Right cardiac atrium (tissue), 5 donors: ENCODE measurements at regions of chr7 and their contacts with region 1.

Region 1: GRCh38 chr7:100889761-100890634 is 483 bp upstream of the UFSP1 start:
- DNase-seq: peak; percentile 96 to 98 (median 98)
- ATAC-seq: peak; percentile 92 to 93
- H3K4me3 ChIP-seq: peak overlapping the region; percentile 51
- H3K27ac ChIP-seq: peak overlapping the region; percentile 88
- H3K4me1 ChIP-seq: peaks cover 4% of the 10 kb centered on the region
- H3K27me3 ChIP-seq: no peaks in the 10 kb centered on the region

Region 2: GRCh38 chr7:100812741-100813478 is 77.1 kb before region 1 on chr7:
- intact Hi-C with region 1: no loop called
- DNase-seq: no peak
- ATAC-seq: peak in 1 of 2 donors; percentile 9
- H3K4me3 ChIP-seq: no peak overlapping the region
- H3K27ac ChIP-seq: no peak overlapping the region
- H3K4me1 ChIP-seq: no peaks in the 10 kb centered on the region
- H3K27me3 ChIP-seq: no peaks in the 10 kb centered on the region

Region 3: GRCh38 chr7:101077303-101078089 is 187.5 kb after region 1 on chr7:
- intact Hi-C with region 1: loop called in 1 of 4 experiments (anchors 5 kb)
- DNase-seq: peak; percentile 76 to 88 (median 80)
- ATAC-seq: peak; percentile 87 to 92
- H3K4me3 ChIP-seq: no peak overlapping the region
- H3K27ac ChIP-seq: no peak overlapping the region
- H3K4me1 ChIP-seq: no peaks in the 10 kb centered on the region
- H3K27me3 ChIP-seq: no peaks in the 10 kb centered on the region

Region 4: DNA sequence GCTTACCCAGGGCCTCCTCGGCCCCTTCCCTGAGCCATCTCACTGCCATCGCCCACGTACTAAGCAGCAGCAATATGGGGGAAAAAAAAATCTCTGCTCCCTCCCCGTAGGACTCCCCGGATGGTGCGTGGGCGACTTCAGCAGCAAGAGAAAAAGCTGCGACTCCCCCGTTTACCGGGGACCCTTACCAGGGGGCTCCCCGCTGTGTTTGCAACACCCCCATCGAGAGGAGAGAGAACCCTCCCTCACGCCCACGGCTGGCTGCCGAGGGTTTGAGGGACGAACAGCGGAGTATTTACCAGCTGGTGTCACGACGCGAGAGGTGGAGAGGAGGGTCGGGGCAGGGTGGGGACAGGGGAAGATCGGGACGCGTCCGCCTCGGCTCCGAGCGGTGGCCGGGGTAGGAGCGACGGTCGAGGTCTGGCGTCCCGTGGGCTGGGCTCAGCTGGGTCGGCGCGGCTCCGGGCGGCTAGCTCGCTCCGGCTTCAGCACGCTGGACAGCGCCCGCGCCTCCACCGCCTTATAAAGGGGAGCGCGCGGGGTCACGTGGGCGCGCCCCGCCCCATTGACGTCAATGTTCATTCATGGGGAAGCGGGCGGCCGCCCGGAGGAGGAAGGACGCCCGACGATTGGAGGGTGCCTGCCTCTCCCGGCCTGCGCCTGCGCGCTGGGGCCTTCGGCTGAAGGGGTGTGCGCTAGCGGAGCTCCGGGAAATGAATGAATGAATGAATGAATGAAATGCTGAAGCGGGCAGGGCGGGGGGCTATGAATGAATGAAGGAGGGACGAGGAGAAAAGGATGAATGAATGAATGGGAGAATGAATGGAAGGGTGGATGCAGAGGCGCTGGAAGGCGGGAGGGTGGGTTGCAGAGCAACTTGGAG is 275.3 kb after region 1 on chr7 and contains the start of gene VGF:
- intact Hi-C with region 1: loop called in 1 of 4 experiments (anchors 10 kb)
- DNase-seq: peak; percentile 96 to 98 (median 97)
- ATAC-seq: peak; percentile 89 to 92
- H3K4me3 ChIP-seq: peak within 1 kb of the TSS; percentile 12
- H3K27ac ChIP-seq: no peak within 1 kb of the TSS
- H3K4me1 ChIP-seq: peaks cover 6% of the 10 kb centered on the region
- H3K27me3 ChIP-seq: no peaks in the 10 kb centered on the region
- total RNA-seq, gene VGF: not detected